ENCODE measurements at regions of chr2 and their contacts with region 1.

Region 1: GRCh38 chr2:158745044-158745865 is 49.9 kb upstream of the DAPL1 start:
- DNase-seq: no peak
- ATAC-seq: no peak
- H3K4me3 Mint-ChIP-seq: no peak overlapping the region
- H3K27ac Mint-ChIP-seq: no peak overlapping the region
- H3K4me1 Mint-ChIP-seq: no peaks in the 10 kb centered on the region
- H3K27me3 Mint-ChIP-seq: peaks cover 11% of the 10 kb centered on the region
- CTCF ChIP-seq: no peak

Region 2: DNA sequence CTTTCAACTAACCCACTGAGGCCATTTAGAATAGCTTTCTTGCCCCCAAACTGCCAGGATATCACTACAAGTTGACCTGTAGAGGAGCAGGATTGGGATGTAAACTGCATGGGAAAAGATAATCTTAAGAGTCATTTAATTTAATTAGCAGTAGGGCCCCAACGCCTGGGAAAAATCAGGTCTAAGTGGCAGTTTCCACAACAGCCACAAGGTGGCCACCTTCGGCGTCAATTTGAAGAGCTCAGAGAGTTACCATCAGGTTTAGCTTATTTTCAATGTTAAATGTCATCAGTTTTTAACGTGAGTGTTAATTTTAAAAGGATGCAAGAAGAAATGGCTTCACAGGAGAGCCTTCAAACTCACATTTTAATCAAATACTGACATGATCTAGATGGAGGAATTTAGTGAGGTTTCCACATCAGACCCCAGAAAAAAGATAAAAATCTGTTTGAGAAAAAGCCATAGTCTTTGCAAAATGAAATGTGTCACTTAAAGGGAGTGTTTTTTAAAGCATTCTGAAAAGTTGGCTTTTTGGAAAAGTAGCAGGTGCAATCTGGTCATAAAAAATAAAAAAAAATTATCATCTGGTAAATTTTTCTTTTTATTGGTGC is 720.9 kb before region 1 on chr2:
- CTCF ChIA-PET with region 1: interaction called, 86 read pairs
- POLR2A ChIA-PET with region 1: no interaction called
- intact Hi-C with region 1: loop called (anchors 1 kb)
- DNase-seq: no peak
- ATAC-seq: peak; percentile 54
- H3K4me3 Mint-ChIP-seq: no peak overlapping the region
- H3K27ac Mint-ChIP-seq: no peak overlapping the region
- H3K4me1 Mint-ChIP-seq: no peaks in the 10 kb centered on the region
- H3K27me3 Mint-ChIP-seq: no peaks in the 10 kb centered on the region
- CTCF ChIP-seq: peak; percentile 93

Region 3: GRCh38 chr2:158179660-158180059 is 565.6 kb before region 1 on chr2:
- CTCF ChIA-PET with region 1: interaction called, 19 read pairs
- POLR2A ChIA-PET with region 1: no interaction called
- intact Hi-C with region 1: loop called (anchors 2 kb)
- DNase-seq: no peak
- ATAC-seq: no peak
- H3K4me3 Mint-ChIP-seq: no peak overlapping the region
- H3K27ac Mint-ChIP-seq: no peak overlapping the region
- H3K4me1 Mint-ChIP-seq: peaks cover 2% of the 10 kb centered on the region
- H3K27me3 Mint-ChIP-seq: peaks cover 16% of the 10 kb centered on the region
- CTCF ChIP-seq: no peak

Region 4: GRCh38 chr2:158317642-158318041 is 427.6 kb before region 1 on chr2:
- CTCF ChIA-PET with region 1: no interaction called
- POLR2A ChIA-PET with region 1: no interaction called
- intact Hi-C with region 1: no loop called
- DNase-seq: no peak
- ATAC-seq: no peak
- H3K4me3 Mint-ChIP-seq: no peak overlapping the region
- H3K27ac Mint-ChIP-seq: no peak overlapping the region
- H3K4me1 Mint-ChIP-seq: peaks cover 4% of the 10 kb centered on the region
- H3K27me3 Mint-ChIP-seq: no peaks in the 10 kb centered on the region
- CTCF ChIP-seq: no peak

Region 5: GRCh38 chr2:158729873-158730620 is 15.2 kb before region 1 on chr2:
- CTCF ChIA-PET with region 1: no interaction called
- POLR2A ChIA-PET with region 1: no interaction called
- intact Hi-C with region 1: no loop called
- DNase-seq: no peak
- ATAC-seq: no peak
- H3K4me3 Mint-ChIP-seq: no peak overlapping the region
- H3K27ac Mint-ChIP-seq: no peak overlapping the region
- H3K4me1 Mint-ChIP-seq: no peaks in the 10 kb centered on the region
- H3K27me3 Mint-ChIP-seq: no peaks in the 10 kb centered on the region
- CTCF ChIP-seq: no peak

Region 6: GRCh38 chr2:158766524-158766923 is 21.3 kb after region 1 on chr2:
- CTCF ChIA-PET with region 1: no interaction called
- POLR2A ChIA-PET with region 1: no interaction called
- intact Hi-C with region 1: no loop called
- DNase-seq: no peak
- ATAC-seq: no peak
- H3K4me3 Mint-ChIP-seq: no peak overlapping the region
- H3K27ac Mint-ChIP-seq: no peak overlapping the region
- H3K4me1 Mint-ChIP-seq: no peaks in the 10 kb centered on the region
- H3K27me3 Mint-ChIP-seq: no peaks in the 10 kb centered on the region
- CTCF ChIP-seq: no peak

Region 7: GRCh38 chr2:159076241-159076640 is 331.0 kb after region 1 on chr2:
- CTCF ChIA-PET with region 1: no interaction called
- POLR2A ChIA-PET with region 1: no interaction called
- intact Hi-C with region 1: no loop called
- DNase-seq: no peak
- ATAC-seq: no peak
- H3K4me3 Mint-ChIP-seq: no peak overlapping the region
- H3K27ac Mint-ChIP-seq: no peak overlapping the region
- H3K4me1 Mint-ChIP-seq: no peaks in the 10 kb centered on the region
- H3K27me3 Mint-ChIP-seq: peaks cover 5% of the 10 kb centered on the region
- CTCF ChIP-seq: no peak

Measured in activated B cell treated with CpG ODN at 0.5 μM for 24 hours (primary cell).